ENCODE measurements at regions of chr10 and their contacts with region 1.

Region 1: DNA sequence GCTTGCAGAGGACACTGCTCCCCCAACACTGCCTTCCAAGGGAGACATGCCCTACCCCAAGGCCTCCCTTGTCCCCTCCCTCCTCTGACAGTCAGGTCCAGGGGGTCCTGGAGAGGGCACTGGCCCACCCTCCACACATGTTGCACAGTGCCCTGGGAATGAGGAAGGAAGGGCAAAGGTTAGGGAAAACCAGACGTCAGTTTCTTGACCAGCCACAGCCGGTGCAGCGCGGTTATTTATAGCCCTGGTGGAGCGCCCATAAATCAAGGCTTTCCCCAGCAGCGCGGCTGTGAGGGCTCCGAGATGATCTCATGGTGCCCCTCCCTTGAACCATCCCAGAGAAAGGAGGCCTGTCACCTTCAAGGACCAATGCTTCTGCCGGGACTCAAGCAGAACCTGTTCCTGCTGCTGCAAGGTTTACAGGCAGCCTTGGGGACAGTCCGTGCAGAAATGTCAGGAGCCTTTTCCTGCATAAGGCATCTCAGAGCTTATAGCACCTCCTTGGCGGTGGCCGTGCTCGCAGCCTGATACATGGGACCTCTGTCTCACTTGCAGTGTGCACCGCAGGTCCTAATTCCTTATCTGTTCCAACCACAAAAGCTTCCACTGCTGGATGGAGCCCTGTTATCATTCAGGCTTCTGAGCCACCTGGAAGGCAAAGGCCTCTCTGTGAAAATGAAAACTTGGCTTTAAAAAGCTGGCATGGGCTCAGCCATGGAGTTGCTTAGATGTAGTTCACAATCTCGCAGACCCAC is 127.3 kb downstream of the LHPP start:
- DNase-seq: peak; percentile 15
- ATAC-seq: peak; percentile 37
- H3K4me3 ChIP-seq: peak overlapping the region; percentile 51 to 68 (median 53)
- H3K27ac ChIP-seq: peak overlapping the region; percentile 52
- H3K4me1 ChIP-seq: peaks cover 53% of the 10 kb centered on the region
- H3K27me3 ChIP-seq: no peaks in the 10 kb centered on the region
- CTCF ChIP-seq: no peak
- EP300 ChIP-seq: no peak
- POLR2A ChIP-seq: no peak
- RAD21 ChIP-seq: no peak

Region 2: DNA sequence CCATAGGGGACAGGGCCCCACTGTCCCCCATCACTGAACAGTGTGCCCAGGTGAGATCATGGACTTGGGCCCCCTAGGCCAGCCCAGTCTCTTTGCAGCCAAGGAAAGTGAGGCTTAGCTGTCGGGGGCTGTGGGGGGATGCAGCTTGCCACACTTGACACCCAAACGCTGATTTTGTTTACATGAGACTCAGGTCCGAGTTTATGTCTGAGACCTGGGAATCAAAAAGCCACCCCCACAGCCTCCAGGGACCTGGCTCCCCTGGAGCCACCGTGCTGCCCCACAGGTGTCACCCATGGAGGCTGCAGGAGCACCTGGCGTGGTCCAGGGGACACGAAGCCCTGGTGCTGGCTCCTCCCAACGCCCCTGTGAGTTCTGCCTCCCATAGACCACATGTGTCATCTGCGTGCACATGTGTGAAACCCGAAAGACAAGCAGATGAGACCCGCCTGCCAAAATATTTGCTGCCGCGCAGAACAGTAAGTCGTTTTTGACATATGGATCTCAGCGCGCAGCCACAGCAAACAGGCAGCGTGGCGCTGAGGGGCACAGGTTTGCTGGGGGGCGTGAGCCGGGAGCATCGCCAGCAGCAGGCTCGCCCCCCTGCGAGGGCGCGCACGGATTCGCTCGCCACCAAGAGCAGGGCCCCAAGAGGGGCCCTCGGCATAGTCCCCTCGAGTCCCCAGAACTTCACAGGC is 15.0 kb before region 1 on chr10:
- CTCF ChIA-PET with region 1: no interaction called
- POLR2A ChIA-PET with region 1: no interaction called
- in situ Hi-C with region 1: no loop called
- intact Hi-C with region 1: no loop called
- DNase-seq: no peak
- ATAC-seq: no peak
- H3K4me3 ChIP-seq: no peak overlapping the region
- H3K27ac ChIP-seq: no peak overlapping the region
- H3K4me1 ChIP-seq: peaks cover 10% of the 10 kb centered on the region
- H3K27me3 ChIP-seq: peaks cover 0 to 9% of the 10 kb centered on the region in 2 experiments; a peak in 1 of 5 replicates
- CTCF ChIP-seq: no peak
- EP300 ChIP-seq: no peak
- POLR2A ChIP-seq: no peak
- RAD21 ChIP-seq: no peak

Region 3: DNA sequence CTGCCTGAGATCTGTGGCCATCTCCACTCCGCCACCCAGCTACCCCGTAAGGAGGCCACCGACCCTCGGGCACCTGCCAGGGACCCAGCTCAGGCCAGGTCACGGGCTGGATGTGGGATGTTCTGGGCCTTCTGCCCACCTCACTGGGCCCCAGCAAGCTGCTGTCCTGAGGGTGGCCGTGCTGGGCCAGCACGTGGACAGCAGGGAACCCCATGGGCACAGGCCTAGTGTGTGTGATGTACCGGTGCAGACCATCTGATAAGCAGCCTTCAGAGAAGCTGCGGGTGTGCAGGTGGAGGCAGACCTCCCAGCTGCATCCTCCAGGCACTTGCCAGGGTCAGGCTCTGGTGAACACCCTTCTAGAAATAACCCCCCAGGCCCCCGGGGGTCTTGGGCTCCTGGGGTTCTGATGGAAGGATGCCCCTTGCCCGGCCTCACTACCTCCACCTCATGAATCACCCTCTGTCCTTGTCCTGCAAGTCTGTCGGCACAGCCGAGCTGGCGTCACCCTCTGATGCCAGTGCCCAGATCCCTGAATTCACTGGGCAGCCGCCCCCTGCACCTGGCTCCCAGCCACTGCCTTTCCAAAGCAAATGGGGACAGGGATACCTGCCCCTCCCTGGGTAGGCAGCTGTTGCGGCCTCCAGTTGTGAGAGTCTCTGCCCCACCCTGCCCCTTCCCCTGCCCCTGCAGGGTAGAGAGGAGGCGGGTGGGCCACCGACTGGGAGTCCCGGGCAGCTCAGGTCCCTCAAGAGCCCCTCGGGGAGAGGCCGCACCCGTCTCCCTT is 15.5 kb after region 1 on chr10:
- CTCF ChIA-PET with region 1: no interaction called
- POLR2A ChIA-PET with region 1: interaction called, 12 read pairs
- in situ Hi-C with region 1: no loop called
- intact Hi-C with region 1: loop called (anchors 2 kb)
- DNase-seq: no peak
- ATAC-seq: no peak
- H3K4me3 ChIP-seq: no peak overlapping the region
- H3K27ac ChIP-seq: no peak overlapping the region
- H3K4me1 ChIP-seq: peaks cover 54% of the 10 kb centered on the region
- H3K27me3 ChIP-seq: no peaks in the 10 kb centered on the region
- CTCF ChIP-seq: no peak
- EP300 ChIP-seq: no peak
- POLR2A ChIP-seq: no peak
- RAD21 ChIP-seq: no peak

Region 4: GRCh38 chr10:124719213-124719851 is 130.4 kb after region 1 on chr10:
- CTCF ChIA-PET with region 1: no interaction called
- POLR2A ChIA-PET with region 1: no interaction called
- in situ Hi-C with region 1: no loop called
- intact Hi-C with region 1: no loop called
- DNase-seq: no peak
- ATAC-seq: peak; percentile 32; the same call in 2 of the 3 replicates
- H3K4me3 ChIP-seq: no peak overlapping the region
- H3K27ac ChIP-seq: no peak overlapping the region
- H3K4me1 ChIP-seq: peaks cover 66% of the 10 kb centered on the region
- H3K27me3 ChIP-seq: no peaks in the 10 kb centered on the region
- CTCF ChIP-seq: no peak
- EP300 ChIP-seq: no peak
- POLR2A ChIP-seq: no peak
- RAD21 ChIP-seq: no peak

Measured in HepG2 (cell line).